Adrenal gland (tissue), 19 donors: ENCODE measurements at regions of chrX and their contacts with region 1.

Region 1: DNA sequence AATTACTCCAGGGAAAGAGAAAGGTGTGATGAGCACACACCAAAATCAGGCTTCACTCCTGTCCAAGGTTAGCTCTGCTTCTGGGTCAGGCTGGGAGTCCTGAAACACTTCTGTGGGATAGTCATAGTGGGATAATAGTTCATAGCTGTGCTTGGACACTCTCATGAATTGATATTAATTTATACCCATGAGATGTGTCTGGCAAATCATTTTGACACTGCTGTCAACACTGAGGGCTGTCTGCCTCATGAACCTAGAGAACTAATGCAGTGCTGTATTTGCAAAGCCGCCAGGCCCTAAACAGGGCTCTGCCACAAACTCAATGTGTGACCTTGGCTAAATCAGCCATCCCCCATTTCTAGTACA is 24.5 kb upstream of the PGRMC1 start:
- DNase-seq: no peak
- H3K4me3 ChIP-seq: no peak overlapping the region
- H3K27ac ChIP-seq: no peak overlapping the region
- H3K4me1 ChIP-seq: no peaks in the 10 kb centered on the region
- H3K27me3 ChIP-seq: peaks cover 14% of the 10 kb centered on the region
- CTCF ChIP-seq: no peak
- POLR2A ChIP-seq: no peak

Region 2: DNA sequence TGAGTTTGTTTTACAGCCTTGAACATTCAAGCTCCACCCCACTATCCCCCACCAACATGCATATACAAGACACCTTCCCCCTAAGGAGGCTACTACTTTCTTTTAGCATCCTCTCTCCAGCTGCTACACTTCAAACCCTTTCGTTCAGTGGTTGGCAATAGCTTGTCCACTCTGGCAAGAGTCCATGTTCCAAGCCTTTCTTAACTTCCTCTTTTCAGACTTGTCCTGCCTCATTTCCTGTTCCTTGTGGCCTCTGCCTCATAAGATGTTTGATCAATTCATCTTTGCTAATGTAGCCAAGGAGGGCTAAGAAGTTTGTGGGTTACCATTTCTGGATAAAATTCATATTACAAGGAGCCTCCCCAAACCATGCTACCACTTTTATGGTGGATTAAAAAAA is 408.8 kb before region 1 on chrX:
- intact Hi-C with region 1: no loop called
- DNase-seq: peak in 5 of 7 donors; percentile 20 to 58 (median 40)
- H3K4me3 ChIP-seq: no peak overlapping the region
- H3K27ac ChIP-seq: no peak overlapping the region
- H3K4me1 ChIP-seq: no peaks in the 10 kb centered on the region
- H3K27me3 ChIP-seq: no peaks in the 10 kb centered on the region
- CTCF ChIP-seq: no peak
- POLR2A ChIP-seq: no peak

Region 3: GRCh38 chrX:119105826-119106225 is 105.8 kb before region 1 on chrX:
- intact Hi-C with region 1: no loop called
- DNase-seq: no peak
- H3K4me3 ChIP-seq: no peak overlapping the region
- H3K27ac ChIP-seq: no peak overlapping the region
- H3K4me1 ChIP-seq: no peaks in the 10 kb centered on the region
- H3K27me3 ChIP-seq: peaks cover 6% of the 10 kb centered on the region
- CTCF ChIP-seq: no peak
- POLR2A ChIP-seq: no peak

Region 4: GRCh38 chrX:119145241-119145653 is 66.4 kb before region 1 on chrX:
- intact Hi-C with region 1: loop called in 1 of 2 experiments (anchors 10 kb)
- DNase-seq: peak in 5 of 7 donors; percentile 23 to 55 (median 29)
- H3K4me3 ChIP-seq: no peak overlapping the region
- H3K27ac ChIP-seq: no peak overlapping the region
- H3K4me1 ChIP-seq: no peaks in the 10 kb centered on the region
- H3K27me3 ChIP-seq: peaks cover under 1% of the 10 kb centered on the region
- CTCF ChIP-seq: peak in 5 of 6 experiments; percentile 22 to 47 (median 39)
- POLR2A ChIP-seq: no peak